AG04450 (cell line): ENCODE measurements at regions of chr14 and their contacts with region 1.

Region 1: GRCh38 chr14:21168055-21168454 is 12.2 kb upstream of the OR5AU1 start:
- DNase-seq: no peak
- H3K4me3 ChIP-seq: no peak overlapping the region
- H3K27ac ChIP-seq: no peak overlapping the region
- H3K27me3 ChIP-seq: peaks cover 2% of the 10 kb centered on the region
- CTCF ChIP-seq: no peak

Region 2: GRCh38 chr14:21185491-21185890 is 17.4 kb after region 1 on chr14:
- CTCF ChIA-PET with region 1: no interaction called
- POLR2A ChIA-PET with region 1: interaction called, 11 read pairs
- DNase-seq: no peak
- H3K4me3 ChIP-seq: no peak overlapping the region
- H3K27ac ChIP-seq: no peak overlapping the region
- H3K27me3 ChIP-seq: no peaks in the 10 kb centered on the region
- CTCF ChIP-seq: no peak